Activated CD4-positive, alpha-beta memory T cell treated with anti-CD3 and anti-CD28 coated beads, Interleukin-2, amount 10 ng/mL, durations not matched to agents 7 days and 5 days (primary cell): ENCODE measurements at regions of chr20 and their contacts with region 1.

Region 1: GRCh38 chr20:25057234-25058050 is 497 bp downstream of the ACSS1 start:
- DNase-seq: peak; percentile 82
- H3K4me3 Mint-ChIP-seq: peak overlapping the region; percentile 82
- H3K27ac Mint-ChIP-seq: peak overlapping the region; percentile 89
- H3K4me1 Mint-ChIP-seq: peaks cover 44% of the 10 kb centered on the region
- H3K27me3 Mint-ChIP-seq: peaks cover 20% of the 10 kb centered on the region

Region 2: GRCh38 chr20:24992487-24993205 is 64.8 kb before region 1 on chr20 and contains the start of gene APMAP:
- CTCF ChIA-PET with region 1: interaction called, 14 read pairs
- POLR2A ChIA-PET with region 1: interaction called, 13 read pairs
- DNase-seq: peak; percentile 96
- H3K4me3 Mint-ChIP-seq: peak within 1 kb of the TSS; percentile 90
- H3K27ac Mint-ChIP-seq: peak within 1 kb of the TSS; percentile 79
- H3K4me1 Mint-ChIP-seq: peaks cover 60% of the 10 kb centered on the region
- H3K27me3 Mint-ChIP-seq: peaks cover 8% of the 10 kb centered on the region
- total RNA-seq, gene APMAP: 44.1 to 46.5 TPM

Region 3: GRCh38 chr20:25017257-25018115 is 40.0 kb before region 1 on chr20:
- CTCF ChIA-PET with region 1: no interaction called
- POLR2A ChIA-PET with region 1: no interaction called
- DNase-seq: no peak
- H3K4me3 Mint-ChIP-seq: no peak overlapping the region
- H3K27ac Mint-ChIP-seq: no peak overlapping the region
- H3K4me1 Mint-ChIP-seq: no peaks in the 10 kb centered on the region
- H3K27me3 Mint-ChIP-seq: no peaks in the 10 kb centered on the region

Region 4: GRCh38 chr20:25042531-25043498 is 14.6 kb before region 1 on chr20:
- CTCF ChIA-PET with region 1: no interaction called
- POLR2A ChIA-PET with region 1: interaction called, 12 read pairs
- DNase-seq: peak; percentile 54
- H3K4me3 Mint-ChIP-seq: no peak overlapping the region
- H3K27ac Mint-ChIP-seq: peak overlapping the region; percentile 96
- H3K4me1 Mint-ChIP-seq: peaks cover 28% of the 10 kb centered on the region
- H3K27me3 Mint-ChIP-seq: no peaks in the 10 kb centered on the region

Region 5: GRCh38 chr20:25090492-25091429 is 33.3 kb after region 1 on chr20:
- CTCF ChIA-PET with region 1: no interaction called
- POLR2A ChIA-PET with region 1: interaction called, 19 read pairs
- DNase-seq: peak; percentile 80
- H3K4me3 Mint-ChIP-seq: peak overlapping the region; percentile 11
- H3K27ac Mint-ChIP-seq: peak overlapping the region; percentile 49
- H3K4me1 Mint-ChIP-seq: peaks cover 29% of the 10 kb centered on the region
- H3K27me3 Mint-ChIP-seq: peaks cover 10% of the 10 kb centered on the region

Region 6: DNA sequence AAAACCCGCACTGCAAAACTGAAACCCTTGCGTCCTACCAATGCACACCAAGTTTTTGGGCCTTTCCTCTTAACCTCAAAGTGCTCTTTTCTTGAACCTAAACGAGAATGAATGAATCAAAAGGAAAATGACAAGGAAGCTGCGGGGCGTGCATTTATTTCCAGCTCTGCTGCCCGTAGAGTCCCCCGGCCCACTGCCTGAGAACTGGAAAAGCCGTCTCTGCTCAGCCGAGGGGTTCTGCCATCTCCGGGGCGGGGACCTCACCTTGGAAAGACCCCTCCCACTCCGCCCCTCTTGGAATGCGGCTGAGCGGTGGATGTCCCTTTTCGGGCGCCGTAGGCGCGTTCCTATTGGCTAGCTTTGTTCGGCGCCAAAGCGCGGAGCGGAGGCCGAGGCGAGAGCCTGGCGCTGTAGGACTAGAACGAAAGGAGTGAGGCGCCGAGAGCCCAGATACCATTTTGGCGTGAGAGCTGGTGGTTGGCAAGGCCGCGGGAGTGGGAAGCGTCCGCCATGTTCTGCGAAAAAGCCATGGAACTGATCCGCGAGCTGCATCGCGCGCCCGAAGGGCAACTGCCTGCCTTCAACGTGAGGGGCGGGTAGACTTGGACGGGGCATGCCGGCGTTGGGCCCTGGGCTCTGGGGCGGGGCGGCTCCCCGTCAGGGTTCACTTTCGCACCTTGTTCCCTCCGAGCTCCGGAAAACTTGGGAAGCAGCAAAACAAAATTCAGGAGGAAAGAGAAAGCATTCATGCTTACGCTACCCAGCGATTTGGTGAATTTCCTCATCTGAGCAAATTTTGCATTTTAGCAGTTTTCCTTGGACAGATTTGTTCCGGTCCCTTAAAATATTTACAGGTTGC is 350.1 kb after region 1 on chr20 and contains the start of gene GINS1:
- CTCF ChIA-PET with region 1: no interaction called
- POLR2A ChIA-PET with region 1: interaction called, 10 read pairs
- DNase-seq: peak; percentile 86
- H3K4me3 Mint-ChIP-seq: peak within 1 kb of the TSS; percentile 90
- H3K27ac Mint-ChIP-seq: peak within 1 kb of the TSS; percentile 79
- H3K4me1 Mint-ChIP-seq: peaks cover 34% of the 10 kb centered on the region
- H3K27me3 Mint-ChIP-seq: no peaks in the 10 kb centered on the region
- total RNA-seq, gene GINS1: 27.5 to 28.0 TPM